ENCODE measurements at regions of chr3 and their contacts with region 1.

Region 1: GRCh38 chr3:157088601-157089454 is 71.1 kb downstream of the CCNL1 start:
- DNase-seq: peak; percentile 93
- H3K4me3 Mint-ChIP-seq: peak overlapping the region; percentile 70
- H3K27ac Mint-ChIP-seq: peak overlapping the region; percentile 93
- H3K4me1 Mint-ChIP-seq: peaks cover 76% of the 10 kb centered on the region
- H3K27me3 Mint-ChIP-seq: no peaks in the 10 kb centered on the region

Region 2: DNA sequence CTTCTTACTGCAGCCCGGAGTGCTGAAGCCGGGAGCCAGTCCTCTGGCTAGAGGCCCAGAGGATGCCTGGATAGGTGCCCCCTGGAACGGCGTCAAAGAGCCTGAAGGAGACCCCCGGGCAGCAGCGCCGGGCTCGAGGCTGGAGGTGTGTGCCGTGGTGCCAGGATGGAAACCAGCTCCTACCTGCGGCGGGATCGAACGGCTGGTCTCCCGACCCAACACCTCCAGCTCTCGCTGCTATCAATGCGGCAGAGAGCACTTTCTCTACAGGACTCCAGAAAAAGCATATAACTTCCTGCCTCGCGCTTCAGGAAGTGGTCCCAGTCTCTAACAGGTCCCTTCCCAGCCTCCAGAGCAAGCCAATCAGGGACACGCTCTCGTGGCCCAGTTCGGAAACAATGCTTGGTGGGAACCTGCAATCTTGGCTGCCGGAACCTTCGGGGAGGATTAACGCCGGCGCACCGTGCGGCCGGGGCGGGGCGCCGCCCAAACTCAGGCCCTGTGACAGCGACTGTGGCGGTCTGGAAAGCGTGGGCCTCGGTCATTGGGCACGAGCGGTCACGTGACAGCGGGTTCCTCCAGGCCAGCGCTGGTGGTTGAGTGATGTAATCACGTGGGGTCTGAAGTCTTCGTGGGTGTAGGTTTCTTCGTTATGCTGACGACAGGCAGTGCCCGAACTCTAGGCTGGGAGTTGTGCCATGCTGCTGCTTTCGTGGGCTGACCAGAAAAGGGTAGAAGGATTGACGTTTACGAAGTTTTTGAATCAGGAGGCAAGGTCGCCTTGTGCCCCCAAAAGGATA is 1234.5 kb before region 1 on chr3 and contains the start of gene SLC33A1:
- intact Hi-C with region 1: loop called (anchors 2 kb)
- DNase-seq: peak; percentile 98
- H3K4me3 Mint-ChIP-seq: peak within 1 kb of the TSS; percentile 91
- H3K27ac Mint-ChIP-seq: peak within 1 kb of the TSS; percentile 96
- H3K4me1 Mint-ChIP-seq: peaks cover 36% of the 10 kb centered on the region
- H3K27me3 Mint-ChIP-seq: no peaks in the 10 kb centered on the region
- total RNA-seq, gene SLC33A1: 27.4 and 30.7 TPM in 2 replicates

Region 3: DNA sequence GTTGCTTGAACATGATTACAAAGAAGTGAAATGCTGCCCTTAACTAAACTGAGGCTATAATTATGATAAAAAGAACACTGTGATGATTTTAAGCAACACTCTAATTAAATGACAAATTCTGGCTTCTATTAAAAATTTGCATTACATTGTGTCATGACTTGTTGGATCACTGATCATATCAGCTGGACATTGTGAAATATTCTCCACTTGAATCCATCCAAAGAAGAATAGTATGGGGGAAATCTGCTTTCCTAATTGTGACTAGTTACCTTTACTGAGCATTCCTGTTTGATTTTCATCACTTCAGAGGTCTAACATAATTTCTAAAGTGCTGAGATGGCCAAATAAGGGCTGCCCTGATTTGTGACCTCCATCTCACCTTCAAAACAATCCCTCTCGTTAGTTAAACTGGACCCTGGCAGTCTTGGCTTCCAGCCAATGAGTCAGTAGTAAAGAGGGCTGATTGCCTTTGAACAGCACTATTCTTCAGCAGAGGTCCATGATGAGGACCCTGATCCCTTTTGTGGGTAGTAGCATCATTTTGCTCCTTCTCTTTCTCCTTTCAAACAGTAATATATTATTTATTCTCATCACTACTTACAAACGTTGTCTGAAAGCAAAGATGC is 316.1 kb before region 1 on chr3:
- intact Hi-C with region 1: no loop called
- DNase-seq: no peak
- H3K4me3 Mint-ChIP-seq: no peak overlapping the region
- H3K27ac Mint-ChIP-seq: no peak overlapping the region
- H3K4me1 Mint-ChIP-seq: no peaks in the 10 kb centered on the region
- H3K27me3 Mint-ChIP-seq: no peaks in the 10 kb centered on the region

Region 4: DNA sequence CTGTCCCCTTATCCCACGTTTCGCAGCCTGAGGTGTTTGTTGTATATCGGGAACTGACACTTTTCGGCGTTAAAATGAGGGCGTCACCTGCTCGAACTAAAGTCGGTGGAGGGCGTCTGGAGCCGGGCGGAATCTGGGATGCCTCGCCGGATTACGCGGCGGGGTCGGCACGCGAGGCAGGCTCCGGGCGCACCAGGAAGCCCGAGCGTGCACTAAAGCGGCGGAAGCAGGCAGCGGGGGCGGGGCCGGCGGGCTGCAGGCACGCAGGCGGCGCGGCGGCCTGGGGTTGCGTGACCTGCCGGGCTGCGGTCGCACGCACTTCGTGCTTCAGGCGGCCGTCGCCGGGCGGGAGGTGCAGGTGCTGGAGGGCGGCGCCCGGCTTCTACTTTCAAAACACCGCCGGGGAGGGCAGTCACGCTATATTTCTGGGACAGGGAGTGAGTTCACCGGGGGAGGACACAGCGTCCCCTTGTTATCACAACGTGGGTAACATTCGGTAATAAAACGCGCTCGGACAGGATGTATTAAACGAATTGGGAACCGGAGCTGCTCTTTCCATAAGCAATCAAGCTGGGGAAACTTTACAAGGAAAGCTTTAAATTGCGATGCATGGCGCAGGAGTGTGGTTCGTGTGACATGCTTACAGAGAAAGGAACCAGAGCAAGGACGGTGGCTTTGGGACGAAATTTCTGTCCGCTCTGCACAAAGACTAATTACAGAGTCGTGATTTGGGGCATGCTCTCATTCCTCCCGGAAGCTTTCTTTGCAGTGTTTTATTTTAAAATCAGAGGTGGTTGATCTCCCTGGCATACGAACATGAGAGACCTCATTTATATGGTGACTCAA is 271.8 kb before region 1 on chr3:
- intact Hi-C with region 1: loop called (anchors 1 kb)
- DNase-seq: peak; percentile 90
- H3K4me3 Mint-ChIP-seq: peak overlapping the region; percentile 92
- H3K27ac Mint-ChIP-seq: peak overlapping the region; percentile 98
- H3K4me1 Mint-ChIP-seq: peaks cover 75% of the 10 kb centered on the region
- H3K27me3 Mint-ChIP-seq: no peaks in the 10 kb centered on the region

Region 5: GRCh38 chr3:157115069-157116006 is 26.5 kb after region 1 on chr3:
- intact Hi-C with region 1: loop called (anchors 1 kb)
- DNase-seq: no peak
- H3K4me3 Mint-ChIP-seq: no peak overlapping the region
- H3K27ac Mint-ChIP-seq: no peak overlapping the region
- H3K4me1 Mint-ChIP-seq: peaks cover 18% of the 10 kb centered on the region
- H3K27me3 Mint-ChIP-seq: no peaks in the 10 kb centered on the region

Region 6: DNA sequence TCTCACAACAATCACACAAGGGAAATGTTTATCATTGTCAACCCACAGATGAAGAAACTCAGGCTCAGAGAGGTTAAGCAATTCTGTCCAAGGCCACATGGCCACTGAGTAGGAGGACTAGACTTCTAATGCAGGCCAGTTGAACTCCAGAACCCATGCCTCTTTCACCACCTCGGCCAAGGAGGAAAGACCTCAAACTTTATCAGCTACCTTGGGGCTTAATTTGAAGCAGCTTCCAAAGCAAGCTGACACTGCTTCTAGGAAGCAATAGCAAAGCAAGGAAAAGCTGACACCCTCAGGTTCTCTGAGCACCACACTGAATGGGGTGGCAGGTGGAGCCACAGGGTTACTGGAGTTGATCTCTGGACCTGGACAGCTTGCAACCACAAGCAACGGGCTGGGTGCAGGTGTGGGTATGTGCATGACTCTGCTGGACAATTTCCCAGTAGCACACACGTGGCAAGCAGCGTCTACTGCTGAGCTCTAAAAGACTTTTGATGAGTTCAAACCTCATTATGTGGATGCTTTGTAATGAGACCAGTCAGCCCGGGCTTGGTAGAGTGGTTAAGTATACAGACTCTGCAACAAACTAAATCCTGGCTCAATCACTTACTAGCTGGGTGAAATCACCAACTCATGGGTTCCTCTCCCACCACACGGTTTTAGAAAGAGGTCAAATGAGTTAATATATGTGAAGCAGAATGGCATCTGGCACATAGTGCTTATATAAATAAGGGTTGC is 48.0 kb after region 1 on chr3:
- intact Hi-C with region 1: loop called (anchors 1 kb)
- DNase-seq: no peak
- H3K4me3 Mint-ChIP-seq: no peak overlapping the region
- H3K27ac Mint-ChIP-seq: peak overlapping the region; percentile 35
- H3K4me1 Mint-ChIP-seq: peaks cover 57% of the 10 kb centered on the region
- H3K27me3 Mint-ChIP-seq: no peaks in the 10 kb centered on the region

Region 7: DNA sequence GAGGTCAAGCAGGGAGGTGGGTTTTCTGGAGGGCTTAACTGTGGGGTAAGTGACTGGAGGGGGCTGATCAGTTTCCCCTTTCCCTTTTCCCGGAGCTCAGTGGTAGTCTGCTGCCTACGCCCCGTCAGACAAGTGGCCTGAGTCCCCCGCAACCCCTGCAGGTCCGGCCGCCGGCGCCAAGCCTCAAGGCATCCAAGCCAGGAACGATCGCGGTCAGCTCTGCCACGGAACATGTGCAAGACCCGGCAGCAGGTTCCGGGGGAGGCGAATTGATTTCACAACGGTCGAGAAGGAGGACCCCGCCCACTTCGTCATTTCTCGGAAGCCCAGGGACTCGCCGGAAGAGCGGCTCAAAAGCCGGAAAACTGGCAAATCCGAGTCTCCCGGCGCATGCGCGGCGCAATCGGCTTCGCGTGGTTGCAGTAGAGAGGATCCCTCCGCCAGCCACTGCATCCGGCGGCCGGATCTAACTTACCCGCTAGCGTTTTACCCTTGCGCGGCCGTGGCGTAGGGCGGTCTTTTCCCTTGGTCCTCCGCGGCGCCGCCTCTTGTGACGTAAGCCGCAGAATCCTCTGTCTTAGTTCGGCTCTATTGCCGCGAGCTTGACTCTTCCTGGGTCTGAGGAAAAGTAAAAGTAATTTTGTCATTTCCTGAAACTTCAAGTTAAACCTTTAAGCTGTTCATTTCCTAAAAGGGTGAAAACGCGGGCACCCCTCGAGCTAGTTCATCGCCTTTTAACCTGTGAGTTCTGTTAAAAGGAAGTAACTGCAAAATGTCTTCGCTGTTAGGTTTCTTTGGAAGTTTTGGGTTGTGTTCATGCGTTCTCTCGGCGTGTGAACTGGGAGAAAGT is 86.0 kb after region 1 on chr3:
- intact Hi-C with region 1: loop called (anchors 1 kb)
- DNase-seq: peak; percentile 98
- H3K4me3 Mint-ChIP-seq: peak overlapping the region; percentile 94
- H3K27ac Mint-ChIP-seq: peak overlapping the region; percentile 96
- H3K4me1 Mint-ChIP-seq: peaks cover 47% of the 10 kb centered on the region
- H3K27me3 Mint-ChIP-seq: peaks cover 2% of the 10 kb centered on the region